ENCODE measurements at regions of chr11 and their contacts with region 1.

Region 1: DNA sequence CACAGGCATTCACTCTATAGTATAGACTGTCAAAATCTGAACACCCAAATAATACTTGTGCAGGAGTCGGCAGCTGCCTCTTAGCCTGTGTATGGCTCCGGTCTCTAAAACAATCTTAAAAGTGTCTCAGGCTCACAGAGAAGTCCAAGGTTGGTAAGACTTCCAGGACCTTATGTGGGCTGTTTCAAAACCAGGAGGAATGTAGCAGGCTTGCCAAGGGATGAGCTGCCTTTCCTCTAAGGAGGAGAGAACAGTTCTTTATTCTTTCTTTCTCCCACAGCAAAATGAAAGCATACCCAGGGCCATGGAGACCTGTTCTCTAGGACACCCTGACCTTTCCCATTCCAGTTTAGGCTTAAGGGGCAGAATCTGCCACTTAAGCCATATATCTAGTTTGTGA is 176.5 kb downstream of the TRPC6 start:
- DNase-seq: no peak
- H3K4me3 ChIP-seq: no peak overlapping the region
- CTCF ChIP-seq: no peak
- POLR2A ChIP-seq: no peak

Region 2: GRCh38 chr11:101390539-101390938 is 16.8 kb before region 1 on chr11:
- intact Hi-C with region 1: loop called (anchors 1 kb)
- DNase-seq: no peak
- H3K4me3 ChIP-seq: no peak overlapping the region
- CTCF ChIP-seq: no peak
- POLR2A ChIP-seq: no peak

Region 3: GRCh38 chr11:101775033-101775432 is 367.7 kb after region 1 on chr11:
- intact Hi-C with region 1: no loop called
- DNase-seq: no peak
- H3K4me3 ChIP-seq: no peak overlapping the region
- CTCF ChIP-seq: no peak
- POLR2A ChIP-seq: no peak